Mammary epithelial cell (primary cell): ENCODE measurements at regions of chr9 and their contacts with region 1.

Region 1: GRCh38 chr9:90307167-90307833 is 335.3 kb downstream of the DIRAS2 start:
- DNase-seq: no peak
- H3K4me3 ChIP-seq: no peak overlapping the region
- H3K27ac ChIP-seq: no peak overlapping the region
- H3K4me1 ChIP-seq: no peaks in the 10 kb centered on the region
- H3K27me3 ChIP-seq: no peaks in the 10 kb centered on the region
- CTCF ChIP-seq: no peak

Region 2: GRCh38 chr9:90331826-90332575 is 24.7 kb after region 1 on chr9:
- CTCF ChIA-PET with region 1: no interaction called
- dilution Hi-C with region 1: no loop called
- in situ Hi-C with region 1: no loop called
- intact Hi-C with region 1: no loop called
- DNase-seq: no peak
- H3K4me3 ChIP-seq: no peak overlapping the region
- H3K27ac ChIP-seq: no peak overlapping the region
- H3K4me1 ChIP-seq: no peaks in the 10 kb centered on the region
- H3K27me3 ChIP-seq: no peaks in the 10 kb centered on the region
- CTCF ChIP-seq: no peak

Region 3: DNA sequence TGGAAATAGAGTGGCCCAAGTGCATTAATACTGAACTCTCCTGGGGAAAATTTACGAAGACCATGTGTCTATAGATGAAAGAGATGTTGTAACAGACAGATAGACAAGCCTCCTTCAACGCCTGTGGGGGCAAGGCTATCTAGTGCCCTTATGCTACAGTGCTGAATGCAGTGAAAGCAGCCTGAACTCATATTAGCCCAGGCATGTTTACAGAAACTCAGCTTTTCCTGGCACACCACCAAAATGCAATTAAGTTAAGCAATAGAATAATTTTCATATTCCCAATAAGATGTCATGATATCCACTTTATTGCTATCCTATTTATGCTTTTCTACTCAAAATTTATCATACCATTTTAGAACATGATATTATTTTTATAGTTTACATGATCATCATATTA is 58.4 kb after region 1 on chr9:
- CTCF ChIA-PET with region 1: interaction called, 10 read pairs
- dilution Hi-C with region 1: no loop called
- in situ Hi-C with region 1: no loop called
- intact Hi-C with region 1: no loop called
- DNase-seq: no peak
- H3K4me3 ChIP-seq: no peak overlapping the region
- H3K27ac ChIP-seq: no peak overlapping the region
- H3K4me1 ChIP-seq: no peaks in the 10 kb centered on the region
- H3K27me3 ChIP-seq: peaks cover 1% of the 10 kb centered on the region
- CTCF ChIP-seq: no peak